CD4-positive, alpha-beta T cell (primary cell): ENCODE measurements at regions of chr2 and their contacts with region 1.

Region 1: DNA sequence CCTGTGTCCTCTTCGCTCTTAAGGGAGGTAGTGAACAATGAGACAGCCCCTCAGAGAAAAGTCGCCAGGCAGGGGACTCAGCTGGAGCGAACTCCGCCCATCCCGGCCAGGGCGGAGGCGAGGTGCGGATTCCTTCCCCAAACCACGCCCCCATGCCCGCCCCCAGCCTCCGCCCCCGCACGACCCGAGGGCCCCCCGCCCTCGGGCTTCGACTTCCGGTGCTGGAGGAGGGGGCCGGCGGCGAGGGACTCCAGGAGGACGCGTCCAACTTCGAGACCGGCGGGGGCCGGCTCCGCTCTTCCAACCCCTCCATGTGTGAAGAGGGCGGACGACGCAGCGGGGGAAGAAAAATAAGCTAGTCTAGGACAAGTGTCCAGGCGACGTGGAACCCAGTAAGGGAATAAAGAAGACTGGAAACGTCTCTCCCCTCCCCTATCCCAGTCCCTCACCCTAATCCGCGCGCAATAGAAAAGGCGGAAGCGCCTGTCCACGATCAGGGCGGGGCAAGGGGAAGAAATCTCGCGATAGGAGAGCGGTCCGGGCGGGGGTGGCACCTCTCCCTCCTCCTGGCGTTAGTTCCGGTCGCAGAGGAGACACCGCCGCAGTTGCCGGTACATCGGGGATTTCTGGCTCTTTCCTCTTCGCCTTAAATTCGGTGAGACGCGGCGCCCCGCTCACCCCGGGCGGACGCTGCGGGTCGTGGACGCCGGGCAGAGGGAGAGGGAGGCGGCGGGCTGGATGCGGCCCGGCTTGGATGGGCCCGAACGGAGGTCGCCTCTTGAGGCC is at the start of gene BZW1:
- DNase-seq: peak; percentile 94 to 98 (median 96)
- ATAC-seq: peak; percentile 86
- H3K4me3 ChIP-seq: peak within 1 kb of the TSS; percentile 77
- H3K4me3 Mint-ChIP-seq: peak within 1 kb of the TSS; percentile 100
- H3K27ac ChIP-seq: peak within 1 kb of the TSS; percentile 97 to 99
- H3K27ac Mint-ChIP-seq: peak within 1 kb of the TSS; percentile 93
- H3K4me1 ChIP-seq: peaks cover 20% of the 10 kb centered on the region
- H3K4me1 Mint-ChIP-seq: peaks cover 57% of the 10 kb centered on the region
- H3K27me3 ChIP-seq: no peaks in the 10 kb centered on the region
- H3K27me3 Mint-ChIP-seq: no peaks in the 10 kb centered on the region
- CTCF ChIP-seq: no peak
- total RNA-seq, gene BZW1: 190 to 192 TPM

Region 2: DNA sequence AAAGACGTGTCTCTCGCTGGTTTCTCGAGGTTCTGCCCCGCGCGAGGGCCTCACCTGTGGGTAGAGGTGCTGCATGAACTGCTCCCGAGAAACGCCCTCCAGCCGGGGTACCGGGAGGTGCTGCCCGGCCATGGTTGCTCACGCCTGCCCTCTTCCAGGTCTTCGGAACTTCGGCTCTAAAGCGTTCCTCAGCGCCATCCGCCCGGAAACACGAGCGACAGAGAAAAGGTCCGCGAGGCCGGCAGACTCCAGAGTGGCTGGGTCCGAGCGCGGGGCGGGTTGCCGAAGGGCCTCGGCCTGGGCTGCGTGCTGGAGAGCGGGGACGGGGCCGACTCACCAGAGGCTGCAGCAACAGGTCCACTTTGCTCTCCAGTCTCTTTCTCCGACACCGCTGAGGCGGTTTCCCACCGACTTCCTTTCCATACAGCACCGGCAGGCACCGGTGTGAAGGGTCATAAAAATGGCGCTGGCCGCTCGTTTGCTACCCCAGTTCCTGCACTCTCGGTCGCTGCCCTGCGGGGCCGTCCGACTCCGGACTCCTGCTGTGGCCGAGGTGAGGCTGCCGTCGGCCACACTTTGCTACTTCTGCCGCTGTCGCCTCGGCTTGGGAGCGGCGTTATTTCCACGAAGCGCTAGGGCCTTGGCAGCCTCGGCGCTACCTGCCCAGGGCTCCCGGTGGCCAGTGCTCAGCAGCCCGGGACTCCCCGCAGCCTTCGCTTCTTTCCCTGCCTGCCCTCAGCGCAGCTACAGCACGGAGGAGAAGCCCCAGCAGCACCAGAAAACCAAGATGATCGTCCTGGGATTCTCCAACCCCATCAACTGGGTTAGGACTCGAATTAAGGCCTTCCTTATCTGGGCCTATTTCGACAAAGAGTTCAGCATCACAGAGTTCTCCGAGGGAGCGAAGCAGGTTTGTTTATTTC is 855.9 kb before region 1 on chr2 and contains the starts of genes MAIP1 and TYW5:
- CTCF ChIA-PET with region 1: no interaction called
- POLR2A ChIA-PET with region 1: no interaction called
- intact Hi-C with region 1: loop called in 1 of 2 experiments (anchors 5 kb)
- DNase-seq: peak; percentile 68 to 88 (median 72)
- ATAC-seq: peak; percentile 87
- H3K4me3 ChIP-seq: peak within 1 kb of the TSS; percentile 83
- H3K4me3 Mint-ChIP-seq: peak within 1 kb of the TSS; percentile 96
- H3K27ac ChIP-seq: peak within 1 kb of the TSS; percentile 68 to 83
- H3K27ac Mint-ChIP-seq: peak within 1 kb of the TSS; percentile 91
- H3K4me1 ChIP-seq: peaks cover 30% of the 10 kb centered on the region
- H3K4me1 Mint-ChIP-seq: peaks cover 70% of the 10 kb centered on the region
- H3K27me3 ChIP-seq: no peaks in the 10 kb centered on the region
- H3K27me3 Mint-ChIP-seq: no peaks in the 10 kb centered on the region
- CTCF ChIP-seq: no peak
- total RNA-seq, gene MAIP1: 34.6 to 35.8 TPM
- total RNA-seq, gene TYW5: 15.0 to 16.0 TPM

Region 3: DNA sequence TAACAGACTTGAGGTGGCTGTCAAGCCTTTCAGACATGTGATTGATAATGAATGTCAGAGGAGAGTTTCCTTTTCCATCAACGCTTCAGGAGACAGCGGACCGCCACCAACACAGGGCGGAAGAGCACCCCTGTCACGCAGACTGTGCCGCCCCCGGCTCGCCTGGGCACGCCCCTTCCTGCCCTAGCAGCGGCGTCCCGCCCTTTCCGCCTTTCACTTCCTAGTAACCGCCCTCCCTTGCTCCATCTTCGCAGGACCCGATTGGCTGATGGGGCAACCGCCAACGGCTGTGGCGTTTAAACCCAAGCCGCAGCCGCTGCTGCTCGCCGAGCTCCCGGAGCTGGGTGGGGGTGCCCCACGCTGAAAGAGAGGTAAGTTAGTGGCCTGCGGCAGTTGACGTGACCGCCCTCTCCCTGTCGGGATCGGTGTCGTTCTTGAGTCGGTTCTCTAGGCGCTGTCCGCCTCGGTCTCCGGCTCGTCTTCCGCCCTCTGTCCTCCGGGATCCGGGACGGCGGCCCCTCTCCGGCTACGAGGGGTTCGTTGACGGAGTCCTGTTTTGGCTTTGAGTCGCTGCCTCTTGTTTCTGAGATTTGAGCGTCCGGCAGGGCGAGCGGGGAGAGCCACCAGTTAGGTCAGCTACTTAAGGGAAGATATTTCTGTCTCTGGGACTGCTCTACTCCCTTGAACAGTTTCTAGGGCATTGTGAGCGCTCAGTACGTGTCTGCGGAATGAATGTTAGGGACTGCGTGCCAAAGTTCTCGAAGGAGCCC is 285.5 kb before region 1 on chr2 and contains the start of gene SGO2:
- CTCF ChIA-PET with region 1: no interaction called
- POLR2A ChIA-PET with region 1: no interaction called
- intact Hi-C with region 1: loop called in 1 of 2 experiments (anchors 5 kb)
- DNase-seq: peak; percentile 90 to 98 (median 94)
- ATAC-seq: peak; percentile 99
- H3K4me3 ChIP-seq: peak within 1 kb of the TSS; percentile 71
- H3K4me3 Mint-ChIP-seq: peak within 1 kb of the TSS; percentile 96
- H3K27ac ChIP-seq: peak within 1 kb of the TSS in 1 of 2 donors; percentile 0
- H3K27ac Mint-ChIP-seq: peak within 1 kb of the TSS; percentile 83
- H3K4me1 ChIP-seq: peaks cover 9% of the 10 kb centered on the region
- H3K4me1 Mint-ChIP-seq: peaks cover 13% of the 10 kb centered on the region
- H3K27me3 ChIP-seq: no peaks in the 10 kb centered on the region
- H3K27me3 Mint-ChIP-seq: no peaks in the 10 kb centered on the region
- CTCF ChIP-seq: no peak
- total RNA-seq, gene SGO2: 0.64 to 0.74 TPM

Region 4: GRCh38 chr2:200864176-200864976 is 52.8 kb after region 1 on chr2 and contains the start of gene CLK1:
- CTCF ChIA-PET with region 1: no interaction called
- POLR2A ChIA-PET with region 1: interaction called, 56 read pairs
- intact Hi-C with region 1: loop called (anchors 2 kb)
- DNase-seq: peak; percentile 95 to 98 (median 97)
- ATAC-seq: peak; percentile 75
- H3K4me3 ChIP-seq: peak within 1 kb of the TSS; percentile 96
- H3K4me3 Mint-ChIP-seq: peak within 1 kb of the TSS; percentile 97
- H3K27ac ChIP-seq: peak within 1 kb of the TSS; percentile 100
- H3K27ac Mint-ChIP-seq: peak within 1 kb of the TSS; percentile 88
- H3K4me1 ChIP-seq: peaks cover 26% of the 10 kb centered on the region
- H3K4me1 Mint-ChIP-seq: peaks cover 48% of the 10 kb centered on the region
- H3K27me3 ChIP-seq: no peaks in the 10 kb centered on the region
- H3K27me3 Mint-ChIP-seq: peaks cover 4% of the 10 kb centered on the region
- CTCF ChIP-seq: no peak
- total RNA-seq, gene CLK1: 1,228 to 1,235 TPM

Region 5: DNA sequence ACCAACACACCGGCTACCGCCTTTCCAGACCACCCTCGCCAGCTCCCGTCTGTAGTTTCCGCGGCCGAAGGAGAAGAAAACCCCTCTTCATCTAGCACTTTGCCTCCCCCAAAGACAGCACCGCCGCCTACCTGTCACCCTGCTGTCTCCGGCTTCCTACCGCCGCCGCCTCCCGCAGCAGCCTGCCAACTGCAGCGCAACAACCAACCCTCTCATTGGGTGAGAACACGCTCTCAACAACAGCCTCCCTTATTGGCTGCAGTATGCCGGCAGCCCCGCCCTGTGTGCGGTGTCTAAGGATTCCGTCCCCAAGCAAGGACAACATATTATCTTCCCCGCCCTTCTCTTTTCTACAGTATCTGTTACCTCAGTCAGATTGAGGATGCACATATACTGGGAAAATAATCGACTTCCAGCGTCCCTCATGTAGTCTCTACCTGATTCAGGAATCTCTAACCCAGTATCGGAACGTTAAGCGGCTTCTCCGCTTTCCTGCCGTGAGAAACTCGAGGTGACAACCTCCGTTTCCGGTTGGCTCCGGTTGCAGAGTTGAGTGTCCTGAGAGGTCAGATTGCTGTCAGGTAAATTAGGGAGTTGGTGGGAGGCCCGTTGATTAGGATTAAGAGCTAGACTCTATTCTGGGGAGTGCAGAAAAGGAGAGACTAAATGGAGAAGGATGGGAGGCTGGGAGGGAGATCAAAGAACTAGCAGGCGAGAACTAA is 260.1 kb after region 1 on chr2 and contains the starts of genes HYCC2 and NDUFB3:
- CTCF ChIA-PET with region 1: no interaction called
- POLR2A ChIA-PET with region 1: interaction called, 3 read pairs
- intact Hi-C with region 1: loop called (anchors 2 to 5 kb)
- DNase-seq: peak; percentile 85 to 98 (median 90)
- ATAC-seq: peak; percentile 92
- H3K4me3 ChIP-seq: peak within 1 kb of the TSS; percentile 87
- H3K4me3 Mint-ChIP-seq: peak within 1 kb of the TSS; percentile 99
- H3K27ac ChIP-seq: peak within 1 kb of the TSS; percentile 84 to 93
- H3K27ac Mint-ChIP-seq: peak within 1 kb of the TSS; percentile 97
- H3K4me1 ChIP-seq: peaks cover 18% of the 10 kb centered on the region
- H3K4me1 Mint-ChIP-seq: peaks cover 50% of the 10 kb centered on the region
- H3K27me3 ChIP-seq: no peaks in the 10 kb centered on the region
- H3K27me3 Mint-ChIP-seq: no peaks in the 10 kb centered on the region
- CTCF ChIP-seq: peak; percentile 39
- total RNA-seq, gene HYCC2: 29.2 to 30.7 TPM
- total RNA-seq, gene NDUFB3: 10.1 to 13.6 TPM

Region 6: GRCh38 chr2:201633661-201634249 is 822.2 kb after region 1 on chr2:
- CTCF ChIA-PET with region 1: no interaction called
- POLR2A ChIA-PET with region 1: no interaction called
- intact Hi-C with region 1: loop called in 1 of 2 experiments (anchors 10 kb)
- DNase-seq: no peak
- ATAC-seq: no peak
- H3K4me3 ChIP-seq: no peak overlapping the region
- H3K4me3 Mint-ChIP-seq: no peak overlapping the region
- H3K27ac ChIP-seq: no peak overlapping the region
- H3K27ac Mint-ChIP-seq: no peak overlapping the region
- H3K4me1 ChIP-seq: no peaks in the 10 kb centered on the region
- H3K4me1 Mint-ChIP-seq: no peaks in the 10 kb centered on the region
- H3K27me3 ChIP-seq: no peaks in the 10 kb centered on the region
- H3K27me3 Mint-ChIP-seq: no peaks in the 10 kb centered on the region
- CTCF ChIP-seq: no peak